ENCODE measurements at regions of chr2 and their contacts with region 1.

Region 1: GRCh38 chr2:203122301-203122986 is 107.8 kb downstream of the NBEAL1 start:
- DNase-seq: peak; percentile 6
- ATAC-seq: no peak; the same call in 1 of the 2 replicates
- H3K4me3 ChIP-seq: no peak overlapping the region
- H3K27ac ChIP-seq: no peak overlapping the region
- H3K4me1 ChIP-seq: peaks cover 3% of the 10 kb centered on the region
- H3K27me3 ChIP-seq: no peaks in the 10 kb centered on the region
- CTCF ChIP-seq: no peak; the same call in 1 of the 2 replicates
- POLR2A ChIP-seq: no peak
- RAD21 ChIP-seq: peak; percentile 24; the same call in 1 of the 2 replicates

Region 2: GRCh38 chr2:202609381-202610145 is 512.9 kb before region 1 on chr2:
- CTCF ChIA-PET with region 1: no interaction called
- POLR2A ChIA-PET with region 1: no interaction called
- dilution Hi-C with region 1: no loop called
- in situ Hi-C with region 1: no loop called
- intact Hi-C with region 1: no loop called
- DNase-seq: no peak
- ATAC-seq: peak; percentile 56; the same call in 1 of the 2 replicates
- H3K4me3 ChIP-seq: no peak overlapping the region
- H3K27ac ChIP-seq: no peak overlapping the region
- H3K4me1 ChIP-seq: no peaks in the 10 kb centered on the region
- H3K27me3 ChIP-seq: no peaks in the 10 kb centered on the region
- CTCF ChIP-seq: no peak
- POLR2A ChIP-seq: no peak
- RAD21 ChIP-seq: no peak

Region 3: DNA sequence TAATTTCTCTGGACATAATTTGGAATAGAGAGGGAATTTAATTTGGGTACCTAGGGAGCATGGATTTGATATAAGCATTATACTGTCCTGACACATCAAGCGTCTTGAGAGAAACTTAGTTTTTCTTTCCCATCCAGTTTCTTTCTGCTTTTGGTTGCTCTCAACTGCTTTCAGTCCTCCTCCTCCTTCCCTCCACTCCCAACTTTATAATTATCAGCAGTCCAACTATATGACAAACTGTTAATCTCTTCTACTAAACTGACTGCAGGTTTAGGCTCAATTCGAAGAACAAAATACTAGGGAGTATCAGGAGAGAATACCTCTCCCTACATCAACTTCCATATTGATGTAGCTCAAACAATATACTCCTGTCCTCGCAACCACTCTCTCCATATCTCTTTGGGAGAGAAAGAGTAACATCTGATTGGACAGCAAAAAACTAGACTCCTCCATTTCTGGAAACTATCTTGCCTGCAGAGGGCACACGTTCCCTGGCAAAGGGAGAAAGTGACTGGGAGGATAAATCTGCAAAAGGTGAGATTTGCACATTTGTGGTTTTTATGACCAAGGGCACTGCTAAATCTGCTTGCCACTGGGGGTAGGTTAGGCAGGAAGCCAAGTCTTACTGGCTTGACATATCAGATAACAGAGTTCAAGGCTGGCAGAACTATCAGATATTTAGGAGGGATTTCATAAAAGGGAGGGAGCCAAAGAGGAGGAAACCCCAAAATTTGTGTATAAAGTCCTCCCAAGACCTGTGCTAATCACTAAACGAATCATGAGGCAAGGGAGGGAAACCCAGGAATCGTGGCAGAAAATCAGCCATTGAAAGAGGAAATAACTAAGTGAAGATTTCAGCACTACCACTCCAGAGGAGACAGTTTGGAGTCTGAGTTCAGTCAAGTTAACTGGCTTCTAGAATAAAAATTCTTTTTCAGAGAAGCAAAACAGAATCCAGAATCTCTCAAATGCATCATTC is 290.9 kb before region 1 on chr2:
- CTCF ChIA-PET with region 1: no interaction called
- POLR2A ChIA-PET with region 1: no interaction called
- dilution Hi-C with region 1: no loop called
- in situ Hi-C with region 1: no loop called
- intact Hi-C with region 1: loop called (anchors 10 kb)
- DNase-seq: peak; percentile 61
- ATAC-seq: peak; percentile 92
- H3K4me3 ChIP-seq: no peak overlapping the region
- H3K27ac ChIP-seq: no peak overlapping the region
- H3K4me1 ChIP-seq: no peaks in the 10 kb centered on the region
- H3K27me3 ChIP-seq: no peaks in the 10 kb centered on the region
- CTCF ChIP-seq: peak; percentile 76
- POLR2A ChIP-seq: no peak
- RAD21 ChIP-seq: peak; percentile 86

Region 4: GRCh38 chr2:203143391-203143790 is 20.9 kb after region 1 on chr2:
- CTCF ChIA-PET with region 1: no interaction called
- POLR2A ChIA-PET with region 1: no interaction called
- dilution Hi-C with region 1: no loop called
- in situ Hi-C with region 1: no loop called
- intact Hi-C with region 1: loop called (anchors 2 kb)
- DNase-seq: no peak
- ATAC-seq: no peak
- H3K4me3 ChIP-seq: no peak overlapping the region
- H3K27ac ChIP-seq: no peak overlapping the region
- H3K4me1 ChIP-seq: no peaks in the 10 kb centered on the region
- H3K27me3 ChIP-seq: no peaks in the 10 kb centered on the region
- CTCF ChIP-seq: no peak
- POLR2A ChIP-seq: no peak
- RAD21 ChIP-seq: no peak